ENCODE measurements at regions of chr7 and their contacts with region 1.

Region 1: DNA sequence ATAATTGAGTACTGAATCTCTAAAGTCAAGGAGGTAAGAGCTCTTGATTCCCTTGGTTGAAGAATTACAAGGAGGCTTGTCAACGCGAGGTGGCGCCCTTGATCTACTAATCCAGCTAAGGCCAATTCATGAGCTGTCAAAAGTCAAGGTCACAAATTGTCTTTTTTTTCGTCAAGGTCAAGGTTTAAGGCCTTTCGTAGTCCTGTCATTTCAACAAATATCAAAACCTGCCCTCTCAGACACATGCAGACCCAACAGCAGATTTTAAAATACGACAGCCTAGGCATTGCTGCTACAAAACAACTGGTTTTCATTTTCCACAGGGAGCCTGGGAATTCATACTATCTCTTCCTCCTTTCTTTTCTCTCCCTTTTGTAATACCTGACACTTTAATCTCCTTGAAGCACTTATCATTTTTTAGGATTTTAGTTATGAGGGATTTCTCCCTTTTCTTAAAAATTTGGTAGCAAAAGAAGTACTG is 3.6 kb downstream of the HOXA13 start:
- DNase-seq: peak; percentile 66
- ATAC-seq: no peak
- H3K4me3 ChIP-seq: no peak overlapping the region
- H3K27ac ChIP-seq: no peak overlapping the region
- H3K4me1 ChIP-seq: peaks cover 10% of the 10 kb centered on the region
- H3K27me3 ChIP-seq: no peaks in the 10 kb centered on the region; the same call in 1 of the 2 replicates
- CTCF ChIP-seq: peak; percentile 89

Region 2: GRCh38 chr7:26667500-26668133 is 528.7 kb before region 1 on chr7:
- CTCF ChIA-PET with region 1: no interaction called
- POLR2A ChIA-PET with region 1: no interaction called
- in situ Hi-C with region 1: no loop called
- intact Hi-C with region 1: no loop called
- DNase-seq: peak; percentile 80
- ATAC-seq: peak; percentile 98
- H3K4me3 ChIP-seq: no peak overlapping the region
- H3K27ac ChIP-seq: no peak overlapping the region
- H3K4me1 ChIP-seq: peaks cover 4% of the 10 kb centered on the region
- H3K27me3 ChIP-seq: no peaks in the 10 kb centered on the region
- CTCF ChIP-seq: peak; percentile 97

Region 3: GRCh38 chr7:27260206-27260605 is 63.9 kb after region 1 on chr7:
- CTCF ChIA-PET with region 1: no interaction called
- POLR2A ChIA-PET with region 1: interaction called, 13 read pairs
- in situ Hi-C with region 1: no loop called
- intact Hi-C with region 1: no loop called
- DNase-seq: no peak
- ATAC-seq: no peak
- H3K4me3 ChIP-seq: no peak overlapping the region
- H3K27ac ChIP-seq: no peak overlapping the region
- H3K4me1 ChIP-seq: 0 out of 2 replicates have a peak, but pooled peaks cover 3% of the 10 kb centered on the region
- H3K27me3 ChIP-seq: no peaks in the 10 kb centered on the region
- CTCF ChIP-seq: no peak

Region 4: DNA sequence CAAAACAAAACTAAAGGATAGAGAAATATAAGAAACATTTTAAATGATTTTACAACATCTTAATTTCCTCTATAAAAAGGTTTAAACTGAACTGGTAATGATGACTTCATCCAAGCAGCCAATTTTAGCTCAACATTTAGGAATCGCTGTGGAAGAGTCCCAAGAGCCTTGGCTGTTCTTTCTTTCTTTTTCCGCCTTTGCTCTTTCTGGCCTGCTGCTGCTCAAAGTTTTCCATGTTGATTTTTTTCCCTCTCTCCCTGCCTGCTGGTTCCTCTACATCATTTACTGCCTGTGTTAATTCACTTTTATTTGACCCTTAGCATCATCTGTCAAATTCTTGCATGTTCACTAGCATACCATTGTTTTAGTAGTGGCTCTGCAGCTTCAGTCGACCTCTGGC is 193.2 kb after region 1 on chr7:
- CTCF ChIA-PET with region 1: no interaction called
- POLR2A ChIA-PET with region 1: no interaction called
- in situ Hi-C with region 1: no loop called
- intact Hi-C with region 1: no loop called
- DNase-seq: no peak
- ATAC-seq: no peak
- H3K4me3 ChIP-seq: no peak overlapping the region
- H3K27ac ChIP-seq: no peak overlapping the region
- H3K4me1 ChIP-seq: no peaks in the 10 kb centered on the region
- H3K27me3 ChIP-seq: no peaks in the 10 kb centered on the region; the same call in 1 of the 2 replicates
- CTCF ChIP-seq: no peak

Region 5: DNA sequence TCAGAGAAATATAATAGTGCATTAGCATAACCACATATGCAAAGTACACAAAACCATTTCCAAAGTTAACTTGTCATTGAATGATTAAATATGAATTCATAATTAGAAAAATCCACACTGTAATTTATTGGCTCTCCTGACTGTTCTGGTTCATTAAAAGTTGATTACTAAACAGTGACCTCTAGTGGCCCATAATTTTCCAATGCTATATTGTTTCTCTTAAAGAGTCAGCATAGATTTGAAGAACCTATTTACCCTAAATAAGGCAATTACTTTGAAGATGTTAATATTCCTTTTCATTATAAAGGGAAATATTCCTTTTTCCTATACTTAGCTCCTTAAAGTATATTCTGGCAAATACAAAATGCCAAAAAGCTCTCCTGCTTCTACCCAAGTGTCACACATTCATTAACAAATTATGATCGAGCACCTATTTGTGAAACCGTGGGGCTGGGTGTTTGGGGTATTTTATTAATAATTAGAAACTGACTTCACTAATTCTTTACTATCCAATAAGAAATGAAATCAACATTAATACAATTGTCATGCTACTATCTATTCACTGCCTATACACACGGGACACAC is 380.1 kb after region 1 on chr7:
- CTCF ChIA-PET with region 1: interaction called, 4 read pairs
- POLR2A ChIA-PET with region 1: no interaction called
- in situ Hi-C with region 1: no loop called
- intact Hi-C with region 1: loop called (anchors 2 kb)
- DNase-seq: peak; percentile 25
- ATAC-seq: peak; percentile 83
- H3K4me3 ChIP-seq: no peak overlapping the region
- H3K27ac ChIP-seq: no peak overlapping the region
- H3K4me1 ChIP-seq: peaks cover 4% of the 10 kb centered on the region; the same call in 1 of the 2 replicates
- H3K27me3 ChIP-seq: no peaks in the 10 kb centered on the region
- CTCF ChIP-seq: peak; percentile 73; the same call in 1 of the 2 replicates

Region 6: GRCh38 chr7:27605689-27606269 is 409.5 kb after region 1 on chr7:
- CTCF ChIA-PET with region 1: interaction called, 5 read pairs
- POLR2A ChIA-PET with region 1: no interaction called
- in situ Hi-C with region 1: no loop called
- intact Hi-C with region 1: loop called (anchors 5 kb)
- DNase-seq: peak; percentile 28
- ATAC-seq: peak; percentile 76
- H3K4me3 ChIP-seq: peak overlapping the region in 1 of 2 experiments; percentile 7; a peak in 2 of 4 replicates
- H3K27ac ChIP-seq: peak overlapping the region; percentile 5; the same call in 1 of the 2 replicates
- H3K4me1 ChIP-seq: peaks cover 50% of the 10 kb centered on the region
- H3K27me3 ChIP-seq: no peaks in the 10 kb centered on the region
- CTCF ChIP-seq: peak; percentile 75; the same call in 1 of the 2 replicates

Region 7: GRCh38 chr7:27784393-27785053 is 588.2 kb after region 1 on chr7:
- CTCF ChIA-PET with region 1: interaction called, 3 read pairs
- POLR2A ChIA-PET with region 1: no interaction called
- in situ Hi-C with region 1: no loop called
- intact Hi-C with region 1: loop called (anchors 5 kb)
- DNase-seq: peak; percentile 81
- ATAC-seq: peak; percentile 95
- H3K4me3 ChIP-seq: no peak overlapping the region
- H3K27ac ChIP-seq: peak overlapping the region; percentile 36; the same call in 1 of the 2 replicates
- H3K4me1 ChIP-seq: peaks cover 26% of the 10 kb centered on the region
- H3K27me3 ChIP-seq: no peaks in the 10 kb centered on the region
- CTCF ChIP-seq: peak; percentile 83

Region 8: DNA sequence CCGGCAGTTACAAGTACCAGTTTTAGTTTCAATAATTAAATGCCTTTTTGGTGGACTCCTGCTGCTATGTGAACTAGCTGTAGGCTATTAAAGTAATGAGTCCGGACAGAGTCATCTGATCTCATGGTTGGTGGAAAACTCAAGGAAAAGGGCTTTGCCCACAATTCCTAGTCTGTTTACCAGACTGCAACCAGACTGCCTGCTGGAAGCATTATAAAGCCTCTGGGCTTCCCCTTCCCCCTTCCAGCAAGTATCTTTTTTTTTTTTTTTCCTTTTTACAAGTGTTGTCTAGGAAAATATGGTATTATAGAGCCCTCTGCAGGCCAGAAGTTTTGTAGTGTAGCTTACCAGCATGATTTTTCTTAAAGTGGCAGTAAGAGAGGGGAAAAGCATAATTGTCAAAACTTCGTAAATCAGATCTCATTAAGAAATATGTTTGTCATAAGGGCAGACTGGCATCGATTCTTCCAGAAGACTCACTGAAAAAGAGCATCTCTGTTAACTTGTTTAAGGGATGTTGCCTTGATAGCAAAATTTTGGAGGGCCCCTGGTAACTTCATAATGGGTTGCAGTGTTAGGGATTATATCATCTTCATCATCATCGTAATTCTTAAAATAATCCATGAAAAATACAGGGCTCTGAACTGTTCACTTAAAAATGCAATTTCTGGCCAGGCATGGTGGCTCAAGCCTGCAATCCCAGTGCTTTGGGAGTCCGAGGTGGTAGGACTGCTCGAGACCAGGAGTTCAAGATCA is 724.9 kb after region 1 on chr7:
- CTCF ChIA-PET with region 1: no interaction called
- POLR2A ChIA-PET with region 1: no interaction called
- in situ Hi-C with region 1: no loop called
- intact Hi-C with region 1: loop called (anchors 2 kb)
- DNase-seq: peak; percentile 61
- ATAC-seq: peak; percentile 82
- H3K4me3 ChIP-seq: peak overlapping the region in 1 of 2 experiments; percentile 22; a peak in 1 of 4 replicates
- H3K27ac ChIP-seq: peak overlapping the region; percentile 52
- H3K4me1 ChIP-seq: peaks cover 18% of the 10 kb centered on the region; the same call in 1 of the 2 replicates
- H3K27me3 ChIP-seq: no peaks in the 10 kb centered on the region
- CTCF ChIP-seq: peak; percentile 75

Region 9: GRCh38 chr7:28020302-28020940 is 824.1 kb after region 1 on chr7:
- CTCF ChIA-PET with region 1: interaction called, 4 read pairs
- POLR2A ChIA-PET with region 1: no interaction called
- in situ Hi-C with region 1: no loop called
- intact Hi-C with region 1: loop called (anchors 1 kb)
- DNase-seq: peak; percentile 81
- ATAC-seq: peak; percentile 95
- H3K4me3 ChIP-seq: peak overlapping the region in 1 of 2 experiments; percentile 21; a peak in 1 of 4 replicates
- H3K27ac ChIP-seq: peak overlapping the region; percentile 66
- H3K4me1 ChIP-seq: peaks cover 8% of the 10 kb centered on the region
- H3K27me3 ChIP-seq: no peaks in the 10 kb centered on the region
- CTCF ChIP-seq: peak; percentile 96

Measured in Panc1 (cell line).